ENCODE measurements at regions of chr1 and their contacts with region 1.

Region 1: DNA sequence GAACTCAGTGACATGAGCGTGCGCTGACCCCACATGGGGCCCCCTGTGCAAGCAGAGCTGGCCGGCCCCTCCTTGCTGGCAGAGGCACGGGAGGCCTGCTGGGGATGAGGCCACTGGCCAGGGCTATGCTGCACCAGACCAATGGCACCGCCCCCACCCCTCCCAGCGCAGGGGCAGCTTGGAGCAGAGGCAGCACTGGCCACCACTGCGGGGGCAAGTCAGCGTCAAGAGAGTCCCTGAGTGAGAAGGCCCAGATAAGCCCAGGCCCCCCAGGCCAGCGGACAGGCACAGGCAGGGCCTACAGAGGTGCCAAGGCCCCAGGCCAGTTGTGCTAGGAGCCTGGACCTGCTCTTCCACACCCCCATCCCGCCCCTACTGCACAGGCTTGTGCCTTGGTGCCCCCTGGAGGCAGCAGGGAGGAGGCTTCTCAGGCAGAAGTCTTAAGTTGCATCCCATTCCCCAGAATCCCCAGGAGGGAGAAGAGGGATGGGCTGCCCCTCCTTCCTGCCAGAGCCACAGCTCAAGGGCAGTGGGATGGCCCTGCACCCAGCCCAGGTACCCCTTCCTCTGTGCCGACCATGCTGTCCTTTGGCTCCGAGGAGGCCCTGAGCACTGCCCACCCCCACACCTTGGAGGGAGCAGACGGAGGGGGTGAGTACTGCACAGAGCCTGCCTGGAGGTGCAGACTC is 35.8 kb downstream of the EPHX1 start:
- DNase-seq: peak; percentile 78 to 81
- ATAC-seq: peak; percentile 77 to 88 (median 81)
- H3K4me3 ChIP-seq: no peak overlapping the region
- H3K27ac ChIP-seq: peak overlapping the region in 6 of 10 donors; percentile 12 to 38 (median 24)
- H3K4me1 ChIP-seq: peaks cover 0 to 40% (median 17%) of the 10 kb centered on the region in 9 donors
- H3K27me3 ChIP-seq: no peaks in the 10 kb centered on the region
- CTCF ChIP-seq: peak; percentile 57 to 81 (median 75)

Region 2: GRCh38 chr1:225612287-225612686 is 233.4 kb before region 1 on chr1:
- intact Hi-C with region 1: no loop called
- DNase-seq: no peak
- ATAC-seq: peak in 1 of 8 donors; percentile 25
- H3K4me3 ChIP-seq: no peak overlapping the region
- H3K27ac ChIP-seq: peak overlapping the region in 2 of 10 donors; percentile 22 to 57
- H3K4me1 ChIP-seq: peaks cover 3 to 53% (median 23%) of the 10 kb centered on the region in 9 donors
- H3K27me3 ChIP-seq: no peaks in the 10 kb centered on the region
- CTCF ChIP-seq: no peak

Region 3: DNA sequence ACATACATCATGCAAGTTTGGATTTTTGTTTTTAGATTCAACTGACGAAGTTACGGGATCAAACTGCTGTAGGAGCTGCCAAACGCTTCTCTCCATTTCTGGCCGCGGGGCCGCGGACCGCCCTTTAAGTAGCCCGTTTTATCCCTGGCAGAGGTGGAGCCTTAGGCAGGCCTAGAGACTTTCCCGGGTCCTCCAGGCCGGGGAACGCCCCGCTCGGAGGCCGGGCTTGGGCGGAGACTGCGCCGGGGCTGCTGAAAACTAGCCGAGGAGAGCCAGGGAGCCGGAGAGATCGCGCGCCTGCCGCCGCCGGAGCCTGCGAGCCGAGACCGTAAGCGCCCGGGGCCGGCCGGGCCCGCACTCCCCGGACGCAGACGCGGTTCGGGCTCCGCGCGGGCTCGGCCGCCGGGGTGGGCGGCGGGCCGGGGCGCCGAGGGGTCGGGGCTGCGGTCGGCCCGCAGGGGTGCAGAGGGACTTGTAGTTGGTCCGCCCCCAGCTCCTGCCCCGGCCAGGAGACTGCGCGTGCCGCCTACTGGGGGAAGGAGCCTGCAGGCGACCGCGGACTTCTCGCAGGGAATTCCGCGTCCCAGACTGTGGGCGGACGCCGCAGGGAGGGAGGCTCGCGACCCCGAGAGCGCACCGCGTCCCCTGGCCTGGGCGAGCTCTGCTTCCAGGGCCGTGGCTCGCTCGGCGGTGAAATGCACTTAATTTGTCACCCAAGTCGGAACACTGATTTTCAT is 35.7 kb before region 1 on chr1 and contains the start of gene EPHX1:
- intact Hi-C with region 1: loop called in 5 of 10 experiments (anchors 2 to 5 kb)
- DNase-seq: peak; percentile 91 to 93
- ATAC-seq: peak; percentile 81 to 92 (median 88)
- H3K4me3 ChIP-seq: peak within 1 kb of the TSS; percentile 33 to 95 (median 77)
- H3K27ac ChIP-seq: peak within 1 kb of the TSS; percentile 75 to 97 (median 88)
- H3K4me1 ChIP-seq: peaks cover 16 to 52% (median 45%) of the 10 kb centered on the region in 9 donors
- H3K27me3 ChIP-seq: no peaks in the 10 kb centered on the region
- CTCF ChIP-seq: peak; percentile 16 to 58 (median 39)
- total RNA-seq, gene EPHX1: 34.9 to 80.8 (median 48.4) TPM

Region 4: DNA sequence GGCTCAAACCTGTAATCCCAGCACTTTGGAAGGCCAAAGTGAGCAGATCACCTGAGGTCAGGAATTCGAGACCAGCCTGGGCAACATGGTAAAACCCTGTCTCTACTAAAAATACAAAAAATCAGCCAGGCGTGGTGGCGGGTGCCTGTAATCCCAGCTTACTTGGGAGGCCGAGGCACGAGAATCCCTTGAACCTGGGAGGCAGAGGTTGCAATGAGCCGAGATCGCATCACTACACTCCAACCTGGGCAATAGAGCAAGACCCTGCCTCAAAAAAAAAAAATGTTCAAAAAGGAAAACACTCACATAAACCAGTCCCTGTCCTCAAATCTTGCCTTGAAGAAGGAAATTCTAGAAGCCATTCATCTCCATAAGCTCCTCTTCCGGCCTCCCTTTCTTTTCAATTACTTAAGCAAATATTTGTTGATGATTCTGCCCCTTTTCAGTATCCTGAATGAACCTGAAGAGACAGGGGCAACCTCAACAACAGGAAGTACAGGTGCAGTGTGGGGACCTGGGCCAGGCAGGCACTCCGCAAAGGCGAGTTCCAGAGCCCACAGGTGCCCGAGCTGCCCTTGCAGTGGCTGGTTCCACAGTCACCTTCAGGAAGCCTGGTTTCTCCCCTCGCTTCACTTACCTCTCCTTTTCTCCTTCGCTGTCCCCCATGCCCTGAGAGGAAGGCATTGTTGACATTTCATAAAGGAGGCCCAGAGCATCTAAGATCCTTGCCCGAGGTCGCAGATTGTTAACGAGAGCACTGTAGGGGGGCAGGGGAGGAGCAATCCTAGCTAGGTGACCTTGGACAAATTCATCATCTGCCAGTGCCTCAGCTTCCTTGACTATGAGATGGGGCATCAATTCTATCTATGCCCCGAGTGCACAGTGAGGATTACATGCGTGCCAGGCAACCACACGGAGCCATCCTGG is 52.1 kb after region 1 on chr1:
- intact Hi-C with region 1: no loop called
- DNase-seq: no peak
- ATAC-seq: no peak
- H3K4me3 ChIP-seq: no peak overlapping the region
- H3K27ac ChIP-seq: peak overlapping the region in 1 of 10 donors; percentile 26
- H3K4me1 ChIP-seq: peaks cover 0 to 19% (median 0%) of the 10 kb centered on the region in 9 donors
- H3K27me3 ChIP-seq: no peaks in the 10 kb centered on the region
- CTCF ChIP-seq: no peak

Measured in heart right ventricle (tissue), 16 donors.